ENCODE measurements at regions of chr12 and their contacts with region 1.

Region 1: GRCh38 chr12:23204933-23205778 is 580.2 kb downstream of the ETNK1 start:
- DNase-seq: no peak
- H3K4me3 ChIP-seq: no peak overlapping the region
- H3K27ac ChIP-seq: no peak overlapping the region
- H3K4me1 ChIP-seq: no peaks in the 10 kb centered on the region
- H3K27me3 ChIP-seq: no peaks in the 10 kb centered on the region
- CTCF ChIP-seq: peak in 2 of 3 experiments; percentile 72 to 84; a peak in 3 of 4 replicates
- EP300 ChIP-seq: no peak
- POLR2A ChIP-seq: no peak
- RAD21 ChIP-seq: peak; percentile 89 to 90

Region 2: DNA sequence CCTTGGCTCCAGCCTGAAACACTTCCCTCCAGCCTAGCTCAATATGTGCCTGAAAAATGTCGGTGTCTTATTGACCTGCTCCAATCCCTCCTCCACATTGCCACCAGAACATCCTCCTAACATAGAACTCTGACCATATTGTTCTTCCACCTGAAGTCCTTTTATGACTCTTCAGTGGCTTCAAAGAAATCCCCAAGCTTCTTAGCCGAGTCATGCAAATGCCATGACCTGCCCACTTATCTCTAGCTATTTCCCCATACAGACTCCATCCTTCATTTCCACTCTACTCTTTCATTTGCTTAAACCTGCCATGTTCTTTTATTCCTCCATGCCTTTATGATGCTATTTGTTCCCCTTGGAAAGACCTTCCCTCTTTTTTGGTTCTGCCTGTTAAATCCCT is 11.6 kb before region 1 on chr12:
- CTCF ChIA-PET with region 1: interaction called, 22 read pairs
- POLR2A ChIA-PET with region 1: no interaction called
- DNase-seq: no peak
- H3K4me3 ChIP-seq: no peak overlapping the region
- H3K27ac ChIP-seq: no peak overlapping the region
- H3K4me1 ChIP-seq: no peaks in the 10 kb centered on the region
- H3K27me3 ChIP-seq: no peaks in the 10 kb centered on the region
- CTCF ChIP-seq: no peak
- EP300 ChIP-seq: no peak
- POLR2A ChIP-seq: no peak
- RAD21 ChIP-seq: no peak

Region 3: GRCh38 chr12:23221066-23221465 is 15.9 kb after region 1 on chr12:
- CTCF ChIA-PET with region 1: interaction called, 72 read pairs
- POLR2A ChIA-PET with region 1: no interaction called
- DNase-seq: no peak
- H3K4me3 ChIP-seq: no peak overlapping the region
- H3K27ac ChIP-seq: no peak overlapping the region
- H3K4me1 ChIP-seq: no peaks in the 10 kb centered on the region
- H3K27me3 ChIP-seq: no peaks in the 10 kb centered on the region
- CTCF ChIP-seq: peak; percentile 57 to 78 (median 63)
- EP300 ChIP-seq: no peak
- POLR2A ChIP-seq: no peak
- RAD21 ChIP-seq: peak; percentile 81 to 86

Region 4: DNA sequence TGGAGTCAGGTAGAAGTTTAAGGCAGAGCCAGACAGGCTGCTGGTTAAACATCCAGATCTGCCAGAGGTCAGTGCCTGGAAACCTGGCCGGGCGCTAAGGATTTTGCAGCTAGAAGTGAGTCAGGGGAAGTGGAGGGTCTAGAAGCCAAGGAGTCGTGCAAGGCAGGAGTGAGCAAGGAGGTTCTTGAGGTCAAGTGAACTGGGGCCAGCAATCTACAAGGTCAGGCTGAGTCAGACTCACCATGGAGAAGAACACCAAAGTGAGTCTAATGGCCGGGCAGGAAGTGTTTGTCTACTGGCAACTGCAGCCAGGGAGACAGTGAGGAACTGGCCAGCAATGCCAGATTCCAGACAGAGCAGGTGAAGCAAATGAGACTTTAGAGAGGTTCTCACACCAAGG is 48.0 kb after region 1 on chr12:
- CTCF ChIA-PET with region 1: no interaction called
- POLR2A ChIA-PET with region 1: no interaction called
- DNase-seq: no peak
- H3K4me3 ChIP-seq: no peak overlapping the region
- H3K27ac ChIP-seq: no peak overlapping the region
- H3K4me1 ChIP-seq: no peaks in the 10 kb centered on the region; a peak in 1 of 7 replicates
- H3K27me3 ChIP-seq: no peaks in the 10 kb centered on the region
- CTCF ChIP-seq: no peak
- EP300 ChIP-seq: no peak
- POLR2A ChIP-seq: no peak
- RAD21 ChIP-seq: no peak

Region 5: DNA sequence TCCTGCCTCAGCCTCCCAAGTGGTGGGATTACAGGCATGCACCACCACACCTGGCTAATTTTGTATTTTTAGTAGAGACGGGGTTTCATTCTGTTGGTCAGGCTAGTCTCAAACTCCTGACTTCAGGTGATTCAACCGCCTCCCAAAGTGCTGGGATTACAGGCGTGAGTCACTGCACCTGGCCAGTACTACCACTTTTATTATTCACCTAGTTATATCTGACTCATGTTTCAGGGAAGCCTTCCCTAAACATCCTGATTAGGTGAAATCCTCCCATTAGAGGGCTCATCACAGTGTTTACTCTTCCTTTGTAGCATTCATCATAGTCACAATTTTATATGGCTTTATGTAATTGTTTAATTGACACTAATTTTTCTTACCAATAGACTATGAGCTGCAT is 1039.6 kb after region 1 on chr12:
- CTCF ChIA-PET with region 1: no interaction called
- POLR2A ChIA-PET with region 1: no interaction called
- DNase-seq: no peak
- H3K4me3 ChIP-seq: no peak overlapping the region
- H3K27ac ChIP-seq: no peak overlapping the region
- H3K4me1 ChIP-seq: peaks cover 0 to 6% (median 3%) of the 10 kb centered on the region in 4 experiments; a peak in 2 of 7 replicates
- H3K27me3 ChIP-seq: peaks cover 0 to 1% (median 0%) of the 10 kb centered on the region in 4 experiments; a peak in 1 of 7 replicates
- CTCF ChIP-seq: no peak
- EP300 ChIP-seq: no peak
- POLR2A ChIP-seq: no peak
- RAD21 ChIP-seq: no peak